ENCODE measurements at regions of chr7 and their contacts with region 1.

Region 1: DNA sequence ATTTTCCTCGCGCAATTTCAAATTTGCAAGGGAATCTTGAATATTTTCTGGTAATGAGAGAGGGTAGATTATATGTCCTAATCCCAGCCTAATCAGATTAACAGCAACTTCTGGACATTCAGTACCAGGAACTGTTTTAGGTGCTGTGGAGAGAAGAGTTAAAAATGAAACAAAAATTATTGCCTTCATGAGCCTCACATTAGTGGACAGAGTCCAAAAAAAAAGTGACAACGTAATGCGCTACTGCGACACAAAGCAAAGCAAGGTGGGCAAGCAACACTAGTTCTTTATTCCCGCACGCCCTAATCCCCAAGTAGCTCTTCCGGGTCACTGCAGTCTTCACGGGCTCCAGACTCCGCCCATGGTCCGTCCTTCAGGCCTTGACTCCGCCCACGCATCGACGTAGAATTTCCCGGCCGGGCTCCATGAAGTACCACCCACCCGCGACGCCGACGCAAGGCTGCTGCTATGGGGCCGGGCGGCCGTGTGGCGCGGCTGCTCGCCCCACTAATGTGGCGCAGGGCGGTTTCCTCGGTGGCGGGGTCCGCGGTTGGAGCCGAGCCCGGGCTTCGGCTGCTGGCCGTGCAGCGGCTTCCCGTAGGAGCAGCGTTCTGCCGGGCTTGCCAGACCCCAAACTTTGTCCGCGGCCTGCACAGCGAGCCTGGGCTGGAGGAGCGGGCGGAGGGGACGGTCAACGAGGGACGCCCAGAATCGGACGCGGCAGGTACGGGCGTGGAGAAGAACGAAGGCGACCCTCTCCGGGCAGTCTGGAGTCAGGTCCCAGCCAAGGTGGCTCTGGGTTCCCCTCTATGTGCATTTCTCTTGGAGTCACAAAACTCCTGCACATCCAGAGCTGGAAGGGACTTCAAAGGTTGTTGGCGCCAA is at the start of gene MALSU1:
- DNase-seq: peak; percentile 93
- H3K4me3 Mint-ChIP-seq: peak within 1 kb of the TSS; percentile 88
- H3K27ac Mint-ChIP-seq: peak within 1 kb of the TSS; percentile 88
- H3K4me1 Mint-ChIP-seq: peaks cover 38% of the 10 kb centered on the region
- H3K27me3 Mint-ChIP-seq: peaks cover 4% of the 10 kb centered on the region
- total RNA-seq, gene MALSU1: 92.3 and 92.8 TPM in 2 replicates

Region 2: DNA sequence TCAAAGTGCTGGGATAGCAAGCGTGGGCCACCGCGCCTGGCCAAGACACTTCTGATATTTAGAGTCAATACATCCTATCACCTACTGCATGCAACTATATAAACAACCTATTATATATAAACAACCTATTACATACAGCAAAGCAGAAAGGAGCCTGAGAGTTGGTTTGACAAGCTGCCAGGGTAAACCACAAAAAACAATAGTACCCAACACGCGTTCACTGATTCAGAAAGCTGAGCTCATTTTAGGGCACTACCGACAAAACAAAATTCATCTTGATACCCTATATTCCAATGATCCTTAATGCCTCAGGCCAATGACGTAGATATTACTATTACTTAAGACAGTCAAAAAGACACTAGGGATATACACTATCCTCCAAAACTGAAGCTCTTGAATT is 16.2 kb after region 1 on chr7:
- intact Hi-C with region 1: no loop called
- DNase-seq: no peak
- H3K4me3 Mint-ChIP-seq: no peak overlapping the region
- H3K27ac Mint-ChIP-seq: no peak overlapping the region
- H3K4me1 Mint-ChIP-seq: no peaks in the 10 kb centered on the region
- H3K27me3 Mint-ChIP-seq: peaks cover 5% of the 10 kb centered on the region

Region 3: GRCh38 chr7:23347682-23348180 is 48.6 kb after region 1 on chr7:
- intact Hi-C with region 1: loop called (anchors 2 kb)
- DNase-seq: no peak
- H3K4me3 Mint-ChIP-seq: peak overlapping the region; percentile 48
- H3K27ac Mint-ChIP-seq: no peak overlapping the region
- H3K4me1 Mint-ChIP-seq: peaks cover 31% of the 10 kb centered on the region
- H3K27me3 Mint-ChIP-seq: peaks cover 18% of the 10 kb centered on the region

Measured in activated T-helper 1 cell treated with anti-CD3 and anti-CD28 coated beads, Interleukin-12 subunit alpha, Interleukin-12 subunit beta, Interleukin-2, Interleukin-4 antibody, amounts not matched to agents 30 ng/mL and 10 ng/mL and 1 ng/mL, durations not matched to agents 14 hours and 24 hours and 36 hours (primary cell).